Uterus (tissue), 4 donors: ENCODE measurements at regions of chr2 and their contacts with region 1.

Region 1: GRCh38 chr2:217988014-217988839 is 14.6 kb downstream of the TNS1 start:
- DNase-seq: peak; percentile 86 to 91
- H3K4me3 ChIP-seq: no peak overlapping the region
- H3K27ac ChIP-seq: peak overlapping the region; percentile 52 to 75
- H3K4me1 ChIP-seq: peaks cover 0 to 16% of the 10 kb centered on the region in 2 donors
- H3K27me3 ChIP-seq: no peaks in the 10 kb centered on the region
- CTCF ChIP-seq: peak; percentile 90 to 95 (median 95)
- POLR2A ChIP-seq: no peak

Region 2: DNA sequence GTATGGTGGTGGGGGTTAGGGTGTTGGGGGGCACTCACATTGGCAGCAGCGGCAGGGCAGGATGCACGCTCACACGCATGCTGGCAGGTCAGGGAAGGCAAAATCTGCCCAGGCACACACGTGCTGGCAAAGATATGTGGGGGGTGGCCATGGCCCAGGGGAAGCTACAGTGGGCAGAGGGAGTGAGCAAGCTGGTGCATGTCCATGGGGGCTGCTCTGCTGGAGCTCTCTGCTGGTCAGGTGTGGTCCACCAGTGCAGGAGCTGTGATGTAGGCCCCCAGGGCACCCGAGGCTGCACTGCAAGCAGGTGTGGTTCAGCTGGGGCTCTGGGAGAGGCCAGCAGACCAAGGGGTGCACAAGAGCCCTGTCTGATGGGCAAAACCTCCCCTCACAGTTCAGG is 636.8 kb before region 1 on chr2:
- intact Hi-C with region 1: no loop called
- DNase-seq: no peak
- H3K4me3 ChIP-seq: no peak overlapping the region
- H3K27ac ChIP-seq: no peak overlapping the region
- H3K4me1 ChIP-seq: peaks cover 0 to 3% of the 10 kb centered on the region in 2 donors
- H3K27me3 ChIP-seq: no peaks in the 10 kb centered on the region
- CTCF ChIP-seq: no peak
- POLR2A ChIP-seq: no peak

Region 3: DNA sequence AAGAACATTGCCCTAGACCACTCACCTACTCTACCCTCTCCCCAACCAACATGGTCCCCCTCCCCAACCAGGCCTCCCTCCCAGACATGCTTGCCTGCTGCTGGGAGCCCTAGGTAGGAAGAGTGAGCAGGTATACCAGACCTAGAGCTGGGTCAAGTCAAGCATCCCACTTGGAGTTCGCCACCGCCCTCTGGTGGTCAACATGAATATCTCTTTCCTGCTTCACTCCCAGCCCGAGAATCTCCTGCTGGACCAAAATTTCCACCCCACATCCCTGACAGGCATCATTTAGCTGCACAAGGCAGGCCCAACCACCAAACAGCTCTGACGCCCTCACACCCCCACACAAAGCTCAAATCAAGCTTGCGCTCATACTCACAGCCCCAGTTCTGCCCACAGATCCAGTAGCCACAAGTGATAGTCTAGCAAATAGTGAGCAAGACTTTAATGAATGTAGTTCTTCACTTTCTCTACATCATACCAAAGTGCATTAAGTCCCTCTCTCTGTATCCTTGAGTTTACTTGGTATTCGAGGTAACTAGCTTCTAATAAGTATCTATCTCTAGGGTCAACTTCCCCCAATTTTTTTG is 101.4 kb before region 1 on chr2:
- intact Hi-C with region 1: loop called (anchors 5 kb)
- DNase-seq: peak; percentile 77 to 82
- H3K4me3 ChIP-seq: no peak overlapping the region
- H3K27ac ChIP-seq: peak overlapping the region; percentile 44 to 56
- H3K4me1 ChIP-seq: no peaks in the 10 kb centered on the region
- H3K27me3 ChIP-seq: no peaks in the 10 kb centered on the region
- CTCF ChIP-seq: peak; percentile 78 to 89 (median 80)
- POLR2A ChIP-seq: no peak